ENCODE measurements at regions of chr4 and their contacts with region 1.

Region 1: DNA sequence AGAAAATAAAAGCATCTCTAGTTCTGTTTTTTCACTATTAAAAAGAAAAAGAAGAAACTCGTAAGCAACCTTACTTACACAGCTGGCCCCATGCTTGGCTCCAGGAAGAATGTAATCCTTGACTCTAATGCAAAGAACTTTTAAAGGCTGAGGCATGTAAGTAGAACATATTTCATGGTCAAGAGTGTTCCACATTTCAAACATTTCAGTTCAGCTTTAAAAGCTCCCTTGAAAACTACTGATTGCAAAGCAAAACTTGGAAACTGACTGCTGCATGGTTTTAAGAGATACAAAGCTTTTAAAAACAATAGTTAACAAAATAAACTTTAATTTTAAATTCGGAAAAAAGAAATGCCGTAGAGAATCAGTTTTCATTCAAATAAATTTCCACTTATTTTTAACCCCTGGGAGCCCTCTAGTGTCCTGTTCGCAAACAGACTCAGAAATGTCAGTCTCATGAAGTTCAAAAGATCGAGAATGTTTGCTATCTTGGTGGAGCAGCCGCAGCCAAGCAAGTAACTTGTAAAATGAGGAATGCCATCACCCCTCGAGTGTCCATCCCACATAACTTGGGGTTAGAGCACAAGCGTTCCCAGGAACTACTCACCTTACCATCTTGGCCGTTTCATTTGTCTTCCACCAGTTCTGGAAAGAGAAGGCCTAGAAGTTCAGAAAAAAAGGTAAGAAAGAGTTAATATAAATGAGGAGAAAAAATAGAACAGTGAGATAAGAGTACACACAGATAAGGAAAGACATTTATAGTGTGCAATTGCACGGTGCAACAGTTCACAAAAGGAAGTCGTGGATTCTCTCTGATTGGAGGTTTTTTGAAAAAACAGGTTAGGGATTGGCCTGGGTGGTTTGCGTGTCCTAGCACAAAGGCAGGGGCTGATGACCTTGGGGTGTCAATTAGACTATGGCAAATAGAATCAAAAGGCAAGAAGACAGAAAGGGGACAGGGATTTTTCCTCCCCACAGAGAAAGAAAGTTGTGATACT is at the start of gene GASK1B:
- DNase-seq: peak in 4 of 5 donors; percentile 37 to 70 (median 46)
- H3K4me3 ChIP-seq: peak within 1 kb of the TSS; percentile 61
- H3K27ac ChIP-seq: peak within 1 kb of the TSS; percentile 39 to 81
- H3K4me1 ChIP-seq: peaks cover 12% of the 10 kb centered on the region
- H3K27me3 ChIP-seq: no peaks in the 10 kb centered on the region
- CTCF ChIP-seq: peak; percentile 13 to 67 (median 64)
- EP300 ChIP-seq: no peak
- POLR2A ChIP-seq: peak; percentile 21
- total RNA-seq, gene GASK1B: 60.8 to 145 (median 115) TPM

Region 2: GRCh38 chr4:157992038-157992705 is 180.4 kb before region 1 on chr4:
- intact Hi-C with region 1: loop called (anchors 2 to 5 kb)
- DNase-seq: peak in 3 of 5 donors; percentile 30 to 65 (median 36)
- H3K4me3 ChIP-seq: peak overlapping the region; percentile 34
- H3K27ac ChIP-seq: peak overlapping the region; percentile 64 to 86
- H3K4me1 ChIP-seq: peaks cover 7% of the 10 kb centered on the region
- H3K27me3 ChIP-seq: no peaks in the 10 kb centered on the region
- CTCF ChIP-seq: peak; percentile 79 to 96 (median 83)
- EP300 ChIP-seq: no peak
- POLR2A ChIP-seq: no peak

Region 3: GRCh38 chr4:158006990-158007389 is 165.6 kb before region 1 on chr4:
- intact Hi-C with region 1: loop called in 1 of 4 experiments (anchors 5 kb)
- DNase-seq: no peak
- H3K4me3 ChIP-seq: no peak overlapping the region
- H3K27ac ChIP-seq: peak overlapping the region in 1 of 2 donors; percentile 70
- H3K4me1 ChIP-seq: peaks cover 18% of the 10 kb centered on the region
- H3K27me3 ChIP-seq: no peaks in the 10 kb centered on the region
- CTCF ChIP-seq: no peak
- EP300 ChIP-seq: no peak
- POLR2A ChIP-seq: no peak

Region 4: GRCh38 chr4:158094413-158095134 is 78.0 kb before region 1 on chr4:
- intact Hi-C with region 1: loop called in 2 of 4 experiments (anchors 5 to 10 kb)
- DNase-seq: peak in 4 of 5 donors; percentile 39 to 61 (median 46)
- H3K4me3 ChIP-seq: no peak overlapping the region
- H3K27ac ChIP-seq: peak overlapping the region in 1 of 2 donors; percentile 73
- H3K4me1 ChIP-seq: peaks cover 14% of the 10 kb centered on the region
- H3K27me3 ChIP-seq: no peaks in the 10 kb centered on the region
- CTCF ChIP-seq: no peak
- EP300 ChIP-seq: no peak
- POLR2A ChIP-seq: no peak

Region 5: GRCh38 chr4:158253350-158253980 is 80.9 kb after region 1 on chr4:
- intact Hi-C with region 1: loop called in 1 of 4 experiments (anchors 5 kb)
- DNase-seq: peak in 4 of 5 donors; percentile 39 to 62 (median 46)
- H3K4me3 ChIP-seq: no peak overlapping the region
- H3K27ac ChIP-seq: no peak overlapping the region
- H3K4me1 ChIP-seq: no peaks in the 10 kb centered on the region
- H3K27me3 ChIP-seq: no peaks in the 10 kb centered on the region
- CTCF ChIP-seq: peak in 2 of 3 donors; percentile 44 to 59
- EP300 ChIP-seq: no peak
- POLR2A ChIP-seq: no peak